ENCODE measurements at regions of chr9 and their contacts with region 1.

Region 1: DNA sequence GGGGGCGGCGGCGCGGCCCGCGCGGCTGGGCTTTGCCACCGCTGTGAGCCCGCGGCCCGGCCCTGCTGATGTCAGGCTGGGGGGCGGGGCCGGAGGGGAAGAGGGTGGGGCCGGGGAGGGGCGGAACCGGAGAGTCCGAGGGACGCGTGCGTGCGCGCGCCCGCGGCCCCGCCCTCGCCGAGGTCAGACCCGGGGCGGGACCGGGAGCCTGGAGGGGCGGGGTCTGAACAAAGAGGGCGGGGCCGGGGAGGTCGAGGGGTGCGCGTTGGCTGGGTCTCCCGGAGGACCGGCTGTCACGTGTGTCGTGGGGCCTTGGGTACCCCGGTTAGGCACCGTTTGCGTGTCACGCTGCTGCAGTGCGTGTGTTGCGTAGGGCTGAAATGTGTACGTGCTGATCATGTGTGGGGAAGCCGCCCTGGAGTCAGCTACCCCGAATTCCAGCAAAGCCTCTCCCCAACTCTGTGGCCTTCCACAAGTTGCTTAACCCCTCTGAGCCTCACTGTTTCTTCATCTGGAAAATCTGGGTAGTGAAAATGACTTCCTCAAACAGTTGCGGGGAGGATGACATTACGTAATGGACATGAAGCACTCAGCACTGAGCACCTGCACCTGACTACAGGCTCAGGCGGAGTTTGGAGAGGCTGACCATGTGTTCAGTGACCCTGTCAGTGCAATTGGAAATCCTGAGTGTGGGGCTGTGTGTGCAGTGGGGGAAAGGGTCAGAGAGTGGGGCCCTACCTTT is at the start of gene RALGDS:
- H3K4me3 ChIP-seq: peak within 1 kb of the TSS; percentile 66
- H3K27ac ChIP-seq: peak within 1 kb of the TSS; percentile 74; the same call in 1 of the 2 replicates
- H3K4me1 ChIP-seq: peaks cover 5% of the 10 kb centered on the region; the same call in 1 of the 2 replicates
- CTCF ChIP-seq: no peak

Region 2: DNA sequence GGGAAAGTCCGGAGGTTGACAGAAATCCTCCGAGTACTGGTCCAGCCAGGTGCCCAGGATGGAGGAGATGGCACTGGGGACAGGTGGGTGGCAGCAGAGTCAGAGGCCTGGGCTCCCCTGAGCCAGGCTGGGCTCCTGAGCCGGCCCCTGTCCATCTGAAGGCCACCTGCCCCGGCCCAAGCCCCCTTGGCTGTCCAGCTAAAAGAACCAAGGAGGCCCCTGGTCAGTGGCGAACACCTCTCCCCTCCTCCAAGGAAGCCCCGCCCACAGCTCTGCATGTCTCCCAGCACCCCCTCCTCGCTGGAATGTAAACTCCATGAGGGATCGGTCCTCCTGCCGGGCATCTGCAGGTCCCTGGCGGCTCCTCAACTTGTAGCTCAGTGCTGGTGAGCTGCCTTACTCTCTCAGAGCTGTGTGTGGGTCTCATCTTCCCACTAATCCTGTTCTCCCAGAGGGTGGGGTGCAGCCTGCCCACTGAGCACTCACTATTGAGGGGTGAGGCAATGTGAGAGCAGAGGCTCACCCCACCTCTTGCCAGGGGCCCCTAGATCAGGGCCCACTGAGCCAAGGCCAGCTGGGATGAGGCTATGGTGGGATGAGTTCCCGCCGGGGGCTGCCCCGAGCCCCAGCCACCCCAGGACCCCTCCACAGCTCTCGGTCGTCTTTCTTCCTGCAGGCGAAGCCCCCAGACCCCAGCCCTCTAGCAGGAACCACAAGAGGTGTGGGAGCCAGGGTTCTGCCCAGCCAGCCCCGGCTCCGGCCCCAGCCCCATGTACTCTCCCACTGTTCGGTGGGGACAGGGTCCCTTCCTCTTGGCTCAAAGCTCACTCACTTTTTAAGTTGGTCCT is 12.4 kb before region 1 on chr9:
- CTCF ChIA-PET with region 1: interaction called, 25 read pairs
- POLR2A ChIA-PET with region 1: interaction called, 11 read pairs
- H3K4me3 ChIP-seq: no peak overlapping the region
- H3K27ac ChIP-seq: no peak overlapping the region
- H3K4me1 ChIP-seq: peaks cover 1% of the 10 kb centered on the region; the same call in 1 of the 2 replicates
- CTCF ChIP-seq: no peak